BJ (cell line): ENCODE measurements at regions of chr10 and their contacts with region 1.

Region 1: DNA sequence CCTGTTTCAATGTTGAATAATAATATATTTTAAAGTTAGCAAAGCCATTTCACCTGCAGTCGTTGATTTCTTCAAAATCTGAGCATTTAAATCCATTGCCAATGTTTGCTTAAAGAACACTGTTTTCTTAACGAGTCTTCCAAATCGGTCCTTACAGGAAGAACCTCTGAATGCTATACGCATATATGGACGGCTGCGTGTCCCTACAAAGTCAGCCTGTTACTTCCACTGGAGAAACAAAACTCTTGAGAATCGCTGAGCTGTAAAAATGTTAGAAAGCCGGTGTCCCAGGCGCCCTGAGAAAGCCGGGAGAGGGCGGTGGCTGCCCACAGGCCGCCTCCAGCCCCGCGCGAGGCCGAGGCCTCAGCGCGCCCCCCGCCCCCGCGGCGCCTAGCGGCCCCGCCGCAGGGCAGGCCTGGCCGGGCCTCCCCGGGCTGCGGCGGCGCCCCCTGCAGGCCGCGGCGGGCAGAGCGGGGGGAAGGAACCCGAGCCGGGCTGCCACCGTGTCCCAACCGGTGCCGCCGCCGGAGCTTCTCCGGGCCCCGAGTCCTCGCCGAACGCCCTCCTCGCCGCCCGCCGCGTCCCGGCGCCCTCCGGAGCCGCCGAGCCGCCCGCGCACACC is at the start of gene FHIP2A:
- DNase-seq: no peak
- H3K4me3 ChIP-seq: peak within 1 kb of the TSS; percentile 86
- H3K27me3 ChIP-seq: no peaks in the 10 kb centered on the region
- CTCF ChIP-seq: peak; percentile 32; the same call in 1 of the 2 replicates
- polyA plus RNA-seq, gene FHIP2A: 13.4 and 22.2 TPM in 2 replicates

Region 2: GRCh38 chr10:114477285-114477684 is 344.1 kb before region 1 on chr10:
- CTCF ChIA-PET with region 1: no interaction called
- POLR2A ChIA-PET with region 1: no interaction called
- DNase-seq: no peak
- H3K4me3 ChIP-seq: no peak overlapping the region
- H3K27me3 ChIP-seq: no peaks in the 10 kb centered on the region
- CTCF ChIP-seq: no peak

Region 3: DNA sequence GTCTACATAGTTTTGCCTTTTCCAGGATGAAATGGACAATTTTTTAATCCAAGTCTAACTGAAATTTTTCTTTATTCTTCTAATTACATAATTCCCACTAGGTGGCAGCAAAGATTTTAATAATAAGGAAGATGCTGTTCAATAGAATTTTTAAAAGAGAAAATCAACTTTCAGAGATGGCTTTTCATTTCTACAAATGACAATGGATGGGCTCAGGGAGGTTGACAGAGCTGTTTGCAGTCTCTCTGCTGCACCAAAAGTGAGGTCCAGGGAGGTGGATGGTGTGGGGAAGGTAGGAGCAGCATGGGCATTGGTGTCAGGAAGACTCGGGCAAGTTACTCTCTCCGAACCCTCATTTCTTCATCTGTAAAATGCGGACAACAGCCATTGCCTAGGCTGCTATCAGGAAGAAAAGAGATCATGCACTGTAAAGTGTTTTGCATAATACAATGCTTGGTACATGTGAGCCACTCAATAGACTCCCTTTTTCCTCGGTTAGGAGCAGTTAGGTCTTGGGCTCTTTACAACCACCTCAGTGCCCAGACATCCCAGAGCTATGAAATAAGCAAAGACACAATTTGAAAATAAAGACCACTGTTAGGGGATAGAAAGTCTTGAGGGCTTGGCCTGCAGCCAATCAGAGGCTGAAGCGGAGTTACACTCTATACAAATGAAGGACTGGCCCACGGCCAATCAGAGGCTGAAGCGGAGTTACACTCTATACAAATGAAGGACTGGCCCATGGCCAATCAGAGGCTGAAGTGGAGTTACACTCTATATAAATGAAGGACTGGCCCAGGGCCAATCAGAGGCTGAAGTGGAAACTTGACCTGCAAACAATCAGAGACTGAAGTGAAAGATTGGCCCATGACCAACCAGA is 270.4 kb before region 1 on chr10:
- CTCF ChIA-PET with region 1: interaction called, 11 read pairs
- POLR2A ChIA-PET with region 1: no interaction called
- DNase-seq: no peak
- H3K4me3 ChIP-seq: no peak overlapping the region
- H3K27me3 ChIP-seq: no peaks in the 10 kb centered on the region
- CTCF ChIP-seq: peak; percentile 13; the same call in 1 of the 2 replicates

Region 4: GRCh38 chr10:114779803-114780609 is 41.4 kb before region 1 on chr10:
- CTCF ChIA-PET with region 1: interaction called, 12 read pairs
- POLR2A ChIA-PET with region 1: no interaction called
- DNase-seq: peak; percentile 96
- H3K4me3 ChIP-seq: no peak overlapping the region
- H3K27me3 ChIP-seq: no peaks in the 10 kb centered on the region
- CTCF ChIP-seq: no peak

Region 5: GRCh38 chr10:114869520-114869892 is 48.1 kb after region 1 on chr10:
- CTCF ChIA-PET with region 1: interaction called, 10 read pairs
- POLR2A ChIA-PET with region 1: interaction called, 3 read pairs
- DNase-seq: peak; percentile 42
- H3K4me3 ChIP-seq: no peak overlapping the region
- H3K27me3 ChIP-seq: no peaks in the 10 kb centered on the region
- CTCF ChIP-seq: no peak

Region 6: GRCh38 chr10:114876602-114877300 is 55.3 kb after region 1 on chr10:
- CTCF ChIA-PET with region 1: interaction called, 13 read pairs
- POLR2A ChIA-PET with region 1: no interaction called
- DNase-seq: no peak
- H3K4me3 ChIP-seq: no peak overlapping the region
- H3K27me3 ChIP-seq: no peaks in the 10 kb centered on the region; the same call in 1 of the 2 replicates
- CTCF ChIP-seq: peak; percentile 88

Region 7: GRCh38 chr10:114925587-114926586 is 104.5 kb after region 1 on chr10:
- CTCF ChIA-PET with region 1: no interaction called
- POLR2A ChIA-PET with region 1: no interaction called
- DNase-seq: no peak
- H3K4me3 ChIP-seq: no peak overlapping the region
- H3K27me3 ChIP-seq: no peaks in the 10 kb centered on the region
- CTCF ChIP-seq: no peak